ENCODE measurements at regions of chr3 and their contacts with region 1.

Region 1: DNA sequence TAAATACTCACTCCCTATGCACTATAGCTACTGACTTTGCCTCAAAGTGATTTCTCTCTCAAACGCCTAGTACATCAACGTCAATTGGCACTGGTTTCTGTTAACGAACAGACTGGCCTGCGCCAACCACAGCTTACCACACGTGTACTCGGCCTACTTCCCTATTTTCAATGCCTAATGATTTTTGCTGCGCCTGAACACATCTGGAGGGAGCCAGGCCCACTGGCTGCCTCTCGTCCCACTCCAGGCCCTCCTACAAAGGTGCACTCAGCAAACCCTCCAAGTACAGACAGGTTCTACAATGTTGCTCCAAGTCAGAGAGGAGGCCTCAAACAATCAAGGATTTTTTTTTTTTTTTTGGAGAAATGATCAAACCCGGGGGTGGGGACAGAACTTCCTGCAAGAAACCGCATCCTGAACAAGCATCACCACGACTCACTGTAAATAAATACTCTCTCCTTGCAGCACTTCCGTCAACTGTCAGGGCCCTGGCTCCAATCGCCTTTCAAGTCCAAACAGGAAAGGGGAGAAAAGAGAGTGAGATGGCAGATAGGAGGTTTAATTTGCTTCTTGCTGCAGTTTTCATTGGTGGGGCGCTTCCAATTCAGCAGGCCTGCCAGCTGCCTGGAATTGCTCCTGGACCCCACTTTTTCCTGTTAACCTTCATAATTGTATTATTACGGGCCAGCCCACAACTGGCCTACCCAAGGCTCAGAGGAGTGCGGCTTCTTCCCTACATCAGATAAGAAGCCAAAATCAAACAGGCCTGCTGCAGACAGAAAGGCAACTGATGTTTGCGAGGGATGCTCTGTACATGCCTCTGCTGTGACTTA is 139.3 kb downstream of the FOXP1 start:
- DNase-seq: peak; percentile 44 to 96 (median 84)
- ATAC-seq: peak; percentile 69 to 84
- H3K4me3 Mint-ChIP-seq: peak overlapping the region; percentile 59 to 87 (median 84)
- H3K27ac Mint-ChIP-seq: peak overlapping the region; percentile 95 to 100 (median 99)
- H3K4me1 Mint-ChIP-seq: peaks cover 48 to 97% (median 97%) of the 10 kb centered on the region in 4 donors
- H3K27me3 Mint-ChIP-seq: no peaks in the 10 kb centered on the region

Region 2: GRCh38 chr3:71360764-71361163 is 83.5 kb before region 1 on chr3:
- POLR2A ChIA-PET with region 1: no interaction called
- DNase-seq: peak in 2 of 10 donors; percentile 23 to 39
- ATAC-seq: peak; percentile 58 to 81
- H3K4me3 Mint-ChIP-seq: peak overlapping the region; percentile 26 to 87 (median 72)
- H3K27ac Mint-ChIP-seq: peak overlapping the region; percentile 84 to 97 (median 90)
- H3K4me1 Mint-ChIP-seq: peaks cover 36 to 90% (median 83%) of the 10 kb centered on the region in 4 donors
- H3K27me3 Mint-ChIP-seq: no peaks in the 10 kb centered on the region

Region 3: DNA sequence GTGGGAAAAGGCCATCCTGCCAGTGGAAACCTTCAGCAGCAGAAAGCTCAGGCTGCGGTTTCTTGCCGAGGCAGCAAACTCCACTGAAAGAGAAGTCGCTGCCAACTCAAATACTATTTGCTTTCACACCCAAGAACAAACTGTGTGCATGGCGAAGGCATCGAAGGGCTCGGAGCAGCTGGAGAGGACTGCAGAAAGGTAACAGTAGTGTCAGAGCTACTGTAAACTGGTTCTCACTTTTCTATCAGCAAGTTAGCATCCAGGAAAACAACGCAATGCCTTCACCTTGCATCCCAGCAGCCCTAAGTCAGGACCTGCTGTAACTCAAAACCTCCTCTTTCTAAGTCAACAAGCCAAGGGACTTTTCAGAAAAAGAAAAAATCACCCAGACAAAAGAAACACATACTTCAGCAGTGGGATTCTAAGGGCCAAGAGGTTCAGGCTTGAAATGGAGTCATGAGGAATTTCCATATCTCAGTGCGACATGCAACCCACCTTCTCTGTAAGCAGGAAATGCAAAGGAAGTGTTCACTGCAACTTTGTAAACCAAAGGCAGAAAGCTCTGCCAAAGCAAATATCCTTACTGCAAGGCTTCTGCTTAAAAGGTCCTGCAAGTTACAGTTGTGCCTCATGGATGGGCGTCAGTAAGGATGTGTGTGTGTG is 54.2 kb before region 1 on chr3:
- POLR2A ChIA-PET with region 1: interaction called, 16 read pairs
- DNase-seq: peak in 9 of 10 donors; percentile 22 to 69 (median 44)
- ATAC-seq: peak; percentile 61
- H3K4me3 Mint-ChIP-seq: peak overlapping the region; percentile 53 to 86 (median 82)
- H3K27ac Mint-ChIP-seq: peak overlapping the region; percentile 83 to 98 (median 96)
- H3K4me1 Mint-ChIP-seq: peaks cover 31 to 84% (median 71%) of the 10 kb centered on the region in 4 donors
- H3K27me3 Mint-ChIP-seq: no peaks in the 10 kb centered on the region

Region 4: DNA sequence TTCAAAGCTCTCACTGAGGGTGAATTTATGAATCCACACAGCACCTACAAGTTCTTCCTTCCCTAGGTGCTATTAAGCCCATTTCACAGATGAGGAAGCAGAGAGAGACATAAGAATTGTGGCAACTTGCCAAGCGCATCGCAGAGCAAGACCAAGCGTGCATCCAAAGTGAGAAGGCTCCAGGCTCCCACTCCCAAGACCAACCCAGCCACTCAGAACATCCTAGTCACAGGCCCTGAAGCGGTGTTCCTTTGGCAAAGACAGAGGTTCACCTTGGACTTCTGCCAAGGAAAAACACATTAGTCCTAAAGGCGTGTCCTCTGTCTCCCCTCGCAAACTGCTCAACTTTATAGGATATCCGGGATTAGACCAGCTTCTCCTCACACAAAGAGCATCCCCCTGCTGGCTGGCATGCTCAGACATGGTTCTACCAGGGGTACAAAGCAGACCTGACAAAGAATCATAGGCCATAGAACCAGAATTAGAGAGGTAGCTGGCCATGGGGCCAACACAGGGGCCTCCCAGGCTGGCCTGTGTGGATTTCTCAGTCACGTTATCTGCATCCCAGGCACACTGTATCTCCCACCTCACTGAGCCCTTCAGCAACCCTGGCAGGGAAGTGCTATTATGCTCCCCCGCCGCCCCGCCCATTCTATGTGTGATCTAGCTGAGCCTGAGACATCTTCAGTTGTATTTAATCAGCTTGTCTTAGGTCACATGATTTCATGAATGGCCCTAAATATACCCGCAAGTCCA is 20.9 kb before region 1 on chr3:
- POLR2A ChIA-PET with region 1: interaction called, 71 read pairs
- DNase-seq: no peak
- ATAC-seq: no peak
- H3K4me3 Mint-ChIP-seq: peak overlapping the region; percentile 62 to 81 (median 74)
- H3K27ac Mint-ChIP-seq: peak overlapping the region; percentile 93 to 99 (median 98)
- H3K4me1 Mint-ChIP-seq: peaks cover 52 to 95% (median 88%) of the 10 kb centered on the region in 4 donors
- H3K27me3 Mint-ChIP-seq: no peaks in the 10 kb centered on the region

Region 5: GRCh38 chr3:71428841-71429596 is 15.2 kb before region 1 on chr3:
- POLR2A ChIA-PET with region 1: interaction called, 71 read pairs
- DNase-seq: peak in 2 of 10 donors; percentile 24 to 32
- ATAC-seq: peak; percentile 22 to 37
- H3K4me3 Mint-ChIP-seq: peak overlapping the region; percentile 52 to 79 (median 69)
- H3K27ac Mint-ChIP-seq: peak overlapping the region; percentile 90 to 99 (median 97)
- H3K4me1 Mint-ChIP-seq: peaks cover 59 to 99% (median 97%) of the 10 kb centered on the region in 4 donors
- H3K27me3 Mint-ChIP-seq: no peaks in the 10 kb centered on the region

Region 6: DNA sequence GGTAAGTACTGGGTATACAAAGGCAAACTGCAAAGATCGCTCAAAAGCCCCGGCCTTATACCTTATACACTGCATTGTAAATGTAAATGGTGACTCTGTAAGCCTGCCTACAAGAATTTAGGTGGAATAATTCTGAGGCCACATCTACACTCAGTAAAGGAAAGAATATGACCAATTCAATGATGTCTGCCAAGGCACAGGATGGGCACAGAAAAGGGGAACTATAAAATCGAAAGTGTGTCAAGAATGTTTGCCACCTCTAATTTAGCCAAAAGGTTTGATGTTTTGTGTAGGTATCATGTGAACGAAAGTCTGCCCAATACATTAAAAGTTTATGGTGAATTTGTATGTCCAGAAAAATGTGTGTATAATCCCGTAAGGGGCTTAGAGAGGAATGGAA is 43.2 kb after region 1 on chr3:
- POLR2A ChIA-PET with region 1: interaction called, 61 read pairs
- DNase-seq: peak in 2 of 10 donors; percentile 26 to 31
- ATAC-seq: peak in 1 of 2 donors; percentile 11
- H3K4me3 Mint-ChIP-seq: peak overlapping the region; percentile 74 to 100 (median 88)
- H3K27ac Mint-ChIP-seq: peak overlapping the region; percentile 95 to 100 (median 98)
- H3K4me1 Mint-ChIP-seq: peaks cover 32 to 91% (median 87%) of the 10 kb centered on the region in 4 donors
- H3K27me3 Mint-ChIP-seq: no peaks in the 10 kb centered on the region

Region 7: DNA sequence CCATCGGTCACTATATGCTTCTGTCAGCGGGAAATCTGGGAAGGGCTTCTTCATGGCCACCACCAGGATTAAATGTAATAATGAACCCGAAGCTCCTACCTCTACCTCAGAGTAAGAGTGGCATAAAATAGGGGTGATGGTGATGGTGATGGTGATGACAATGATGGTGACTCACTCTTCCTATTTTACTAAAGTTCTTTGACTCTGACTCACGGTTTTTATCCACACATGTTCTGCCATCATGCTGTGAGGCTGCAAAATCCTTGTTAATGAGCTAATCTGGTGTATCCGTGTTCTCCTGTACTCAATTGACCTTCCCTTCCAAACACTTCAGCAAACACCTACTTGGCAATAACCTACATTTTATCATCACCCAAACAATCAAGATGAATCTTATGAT is 157.6 kb after region 1 on chr3:
- POLR2A ChIA-PET with region 1: no interaction called
- DNase-seq: no peak
- ATAC-seq: no peak
- H3K4me3 Mint-ChIP-seq: no peak overlapping the region
- H3K27ac Mint-ChIP-seq: no peak overlapping the region
- H3K4me1 Mint-ChIP-seq: peaks cover 4 to 6% (median 5%) of the 10 kb centered on the region in 4 donors
- H3K27me3 Mint-ChIP-seq: peaks cover 0 to 4% (median 0%) of the 10 kb centered on the region in 5 donors